Aorta (tissue), 5 donors: ENCODE measurements at regions of chr4 and their contacts with region 1.

Region 1: GRCh38 chr4:89024051-89024675 is 32.8 kb downstream of the FAM13A start:
- DNase-seq: no peak
- ATAC-seq: peak; percentile 95
- H3K4me3 ChIP-seq: no peak overlapping the region
- H3K27ac ChIP-seq: no peak overlapping the region
- H3K4me1 ChIP-seq: peaks cover 0 to 3% of the 10 kb centered on the region in 2 donors
- H3K27me3 ChIP-seq: no peaks in the 10 kb centered on the region

Region 2: DNA sequence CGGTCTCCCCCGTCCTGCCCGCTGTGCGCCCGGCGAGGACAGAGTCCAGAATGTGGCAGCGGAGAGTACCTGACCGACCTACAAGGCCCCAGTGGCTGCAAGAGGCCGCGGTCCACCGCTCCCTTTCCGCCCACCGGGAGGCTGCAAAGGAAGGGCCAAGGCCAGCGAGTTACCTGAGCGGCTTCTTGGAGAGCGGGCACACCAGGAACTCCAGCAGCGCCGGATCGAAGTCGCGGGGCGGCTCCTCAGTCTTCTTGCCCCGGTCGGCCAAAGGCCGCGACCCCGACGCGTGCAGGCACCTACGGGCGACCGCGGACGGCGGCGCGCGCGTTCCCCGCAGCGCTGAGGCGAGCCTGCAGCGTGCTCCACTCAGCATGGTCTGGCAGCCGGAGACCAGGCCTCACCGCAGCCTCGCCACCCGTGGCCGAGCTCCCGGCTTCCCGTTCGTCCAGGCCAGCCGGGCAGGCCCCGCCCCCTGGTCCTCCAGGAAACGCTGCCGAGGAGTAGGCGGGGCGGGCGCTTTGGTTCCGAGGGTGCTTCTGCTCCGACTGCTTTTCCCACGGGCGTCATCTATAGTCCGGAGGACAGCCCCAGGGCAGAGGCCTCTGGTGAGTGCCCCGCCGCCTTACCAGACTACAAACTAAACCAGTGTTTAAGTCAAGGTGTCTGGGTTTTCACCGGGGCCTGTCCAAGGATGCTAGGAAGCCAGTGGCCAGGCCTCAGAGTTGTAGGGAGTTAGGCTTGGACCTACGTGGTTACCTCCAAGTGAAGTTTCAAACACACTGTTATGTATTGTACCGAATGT is 500.6 kb before region 1 on chr4 and contains the start of gene PYURF:
- intact Hi-C with region 1: loop called in 1 of 2 experiments (anchors 10 kb)
- DNase-seq: peak; percentile 98
- ATAC-seq: peak; percentile 98
- H3K4me3 ChIP-seq: peak within 1 kb of the TSS; percentile 74 to 84
- H3K27ac ChIP-seq: peak within 1 kb of the TSS; percentile 65 to 89
- H3K4me1 ChIP-seq: no peaks in the 10 kb centered on the region
- H3K27me3 ChIP-seq: no peaks in the 10 kb centered on the region
- total RNA-seq, gene PYURF: 51.9 TPM

Region 3: GRCh38 chr4:88533937-88534750 is 490.0 kb before region 1 on chr4:
- intact Hi-C with region 1: loop called (anchors 10 kb)
- DNase-seq: no peak
- ATAC-seq: no peak
- H3K4me3 ChIP-seq: no peak overlapping the region
- H3K27ac ChIP-seq: no peak overlapping the region
- H3K4me1 ChIP-seq: no peaks in the 10 kb centered on the region
- H3K27me3 ChIP-seq: no peaks in the 10 kb centered on the region

Region 4: GRCh38 chr4:88672987-88673386 is 351.2 kb before region 1 on chr4:
- intact Hi-C with region 1: loop called in 1 of 2 experiments (anchors 10 kb)
- DNase-seq: no peak
- ATAC-seq: peak; percentile 71
- H3K4me3 ChIP-seq: no peak overlapping the region
- H3K27ac ChIP-seq: no peak overlapping the region
- H3K4me1 ChIP-seq: no peaks in the 10 kb centered on the region
- H3K27me3 ChIP-seq: no peaks in the 10 kb centered on the region

Region 5: DNA sequence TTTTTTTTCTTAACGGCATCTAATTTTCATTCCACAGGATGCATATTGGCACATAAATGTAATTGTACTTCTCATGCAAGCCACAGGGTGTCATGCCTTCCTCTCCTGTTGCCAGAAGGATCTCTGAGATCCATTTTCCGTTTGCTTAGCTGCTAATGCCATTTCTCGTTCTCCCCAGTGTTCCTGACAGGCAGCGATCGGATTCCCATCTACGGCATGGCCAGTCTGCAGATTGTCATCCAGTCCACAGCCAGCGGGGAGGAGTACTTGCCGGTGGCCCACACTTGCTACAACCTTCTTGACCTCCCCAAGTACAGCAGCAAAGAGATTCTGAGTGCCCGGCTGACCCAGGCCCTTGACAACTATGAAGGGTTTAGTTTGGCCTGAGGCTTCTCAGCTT is 317.6 kb before region 1 on chr4:
- intact Hi-C with region 1: loop called (anchors 2 to 5 kb)
- DNase-seq: peak in 1 of 2 donors; percentile 55
- ATAC-seq: peak; percentile 91
- H3K4me3 ChIP-seq: no peak overlapping the region
- H3K27ac ChIP-seq: peak overlapping the region; percentile 0 to 84
- H3K4me1 ChIP-seq: peaks cover 0 to 3% of the 10 kb centered on the region in 2 donors
- H3K27me3 ChIP-seq: no peaks in the 10 kb centered on the region

Region 6: DNA sequence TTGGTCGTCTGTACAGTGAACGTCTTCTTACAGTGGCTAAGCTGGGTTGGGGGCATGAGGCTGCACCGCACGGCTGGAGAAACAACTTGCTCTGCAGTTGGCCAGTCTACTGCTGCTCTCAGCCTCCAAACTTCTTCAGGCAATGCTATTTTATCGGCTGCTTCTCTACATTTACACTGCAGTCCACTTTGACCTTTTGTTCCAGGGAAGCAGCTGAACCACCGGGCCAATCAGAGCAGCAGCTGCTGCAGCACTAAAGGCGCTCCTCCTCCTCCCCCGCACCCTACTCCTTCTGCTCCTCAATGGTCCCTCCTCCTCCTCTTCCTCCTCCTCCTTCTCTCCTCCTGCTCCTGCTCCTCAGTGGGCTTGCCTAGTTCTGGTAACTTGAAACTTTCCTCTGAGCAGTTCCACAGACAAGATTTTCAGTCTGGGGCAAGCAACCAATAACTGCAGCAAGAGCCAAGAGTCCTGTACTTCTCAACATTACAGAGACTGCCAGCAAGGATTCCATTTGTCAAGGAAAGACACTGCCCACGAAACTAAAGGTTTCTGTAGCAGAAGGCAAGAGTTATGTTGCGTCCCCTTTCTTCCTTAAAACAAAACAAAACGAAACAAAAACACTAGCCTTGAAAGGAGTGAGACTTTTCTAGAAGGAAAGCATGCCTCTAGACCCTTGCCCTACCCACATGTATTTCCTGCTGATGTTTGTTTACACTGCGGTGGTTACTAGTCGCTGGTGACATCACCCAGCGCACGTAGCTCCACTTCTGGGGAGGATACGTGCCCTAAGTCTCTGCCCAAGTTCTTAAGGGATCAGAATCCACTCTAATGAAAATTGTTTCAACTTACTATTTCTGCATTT is 200.9 kb before region 1 on chr4:
- intact Hi-C with region 1: loop called (anchors 5 to 10 kb)
- DNase-seq: peak; percentile 88 to 94
- ATAC-seq: peak; percentile 96
- H3K4me3 ChIP-seq: peak overlapping the region; percentile 29 to 67
- H3K27ac ChIP-seq: peak overlapping the region; percentile 76 to 92
- H3K4me1 ChIP-seq: peaks cover 2 to 5% of the 10 kb centered on the region in 2 donors
- H3K27me3 ChIP-seq: no peaks in the 10 kb centered on the region

Region 7: DNA sequence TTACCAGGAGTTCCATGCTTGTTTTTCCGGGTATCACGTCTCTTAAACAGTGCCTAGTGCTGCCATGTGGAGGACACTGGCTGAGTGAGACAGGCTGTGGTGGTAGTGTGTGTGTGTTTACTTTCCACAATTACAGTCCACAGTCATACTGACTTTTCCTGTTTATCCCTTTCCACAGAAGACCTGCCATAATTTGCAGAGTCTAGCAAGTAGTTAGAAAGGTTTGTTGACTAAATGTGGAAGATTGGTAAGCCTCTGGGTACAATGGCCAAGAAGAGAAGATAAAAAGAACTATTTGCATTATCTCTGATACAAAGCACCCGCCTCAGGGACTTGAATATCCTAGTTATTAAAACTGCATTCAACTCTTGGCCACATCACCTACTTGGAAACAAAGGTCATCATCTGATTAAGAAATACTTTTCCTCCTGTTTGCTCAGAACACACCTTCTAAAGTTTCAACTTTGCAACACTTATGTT is 56.3 kb before region 1 on chr4:
- intact Hi-C with region 1: no loop called
- DNase-seq: no peak
- ATAC-seq: no peak
- H3K4me3 ChIP-seq: no peak overlapping the region
- H3K27ac ChIP-seq: no peak overlapping the region
- H3K4me1 ChIP-seq: no peaks in the 10 kb centered on the region
- H3K27me3 ChIP-seq: no peaks in the 10 kb centered on the region